Activated T-helper 1 cell treated with anti-CD3 and anti-CD28 coated beads, Interleukin-12 subunit alpha, Interleukin-12 subunit beta, Interleukin-2, Interleukin-4 antibody, amounts not matched to agents 30 ng/mL and 10 ng/mL and 1 ng/mL, durations not matched to agents 14 hours and 24 hours and 36 hours (primary cell): ENCODE measurements at regions of chr17 and their contacts with region 1.

Region 1: GRCh38 chr17:82450170-82451106 is at the start of gene CYBC1:
- DNase-seq: peak; percentile 93
- H3K4me3 Mint-ChIP-seq: peak within 1 kb of the TSS; percentile 91
- H3K27ac Mint-ChIP-seq: peak within 1 kb of the TSS; percentile 96
- H3K4me1 Mint-ChIP-seq: peaks cover 31% of the 10 kb centered on the region
- H3K27me3 Mint-ChIP-seq: no peaks in the 10 kb centered on the region
- total RNA-seq, gene CYBC1: 253 and 257 TPM in 2 replicates

Region 2: DNA sequence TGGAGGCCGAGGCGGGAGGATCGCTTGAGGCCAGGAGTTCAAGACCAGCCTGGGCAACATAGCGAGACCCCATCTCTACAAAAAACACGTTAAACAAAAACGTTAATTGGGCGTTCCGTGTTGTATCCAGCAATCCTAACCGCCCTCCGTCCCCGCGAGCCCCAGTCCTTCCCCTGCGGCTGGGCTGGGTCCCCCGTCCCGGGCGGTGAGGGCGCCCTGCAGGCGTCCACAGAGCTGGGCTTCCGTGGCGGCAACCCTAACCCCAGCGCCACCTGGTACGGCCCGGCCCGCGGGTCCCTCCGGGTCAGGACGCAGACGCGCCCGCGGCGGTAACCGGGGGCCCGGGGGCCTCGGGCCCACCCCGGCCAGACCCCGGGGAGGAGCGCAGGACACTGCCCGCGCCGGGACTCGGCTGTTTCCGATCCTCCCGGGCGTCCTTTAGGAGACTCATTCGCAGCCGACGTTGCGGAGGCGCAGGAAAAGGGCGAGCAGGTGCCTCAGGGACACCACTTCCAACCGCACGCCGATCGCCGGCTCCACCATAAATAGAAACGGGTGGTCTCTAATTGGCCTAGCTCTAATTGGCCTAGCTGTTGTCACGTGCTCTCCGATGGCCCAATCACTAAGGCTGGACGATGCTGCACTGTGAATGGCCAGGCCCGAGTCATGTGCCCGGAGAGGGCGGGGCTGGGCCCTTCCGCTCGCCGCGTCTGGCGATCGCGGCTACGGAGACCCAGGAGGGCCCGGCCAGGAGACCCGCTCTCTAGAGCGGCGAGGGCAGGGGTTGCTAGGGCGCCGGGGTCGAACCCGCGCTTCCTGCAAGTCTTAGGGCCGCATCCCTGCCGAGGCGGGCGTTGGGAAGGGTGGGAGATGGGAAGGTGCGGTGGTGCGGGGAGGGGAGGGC is 157.9 kb before region 1 on chr17:
- intact Hi-C with region 1: loop called (anchors 2 kb)
- DNase-seq: peak; percentile 92
- H3K4me3 Mint-ChIP-seq: peak overlapping the region; percentile 90
- H3K27ac Mint-ChIP-seq: peak overlapping the region; percentile 93
- H3K4me1 Mint-ChIP-seq: peaks cover 48% of the 10 kb centered on the region
- H3K27me3 Mint-ChIP-seq: peaks cover 2% of the 10 kb centered on the region

Region 3: DNA sequence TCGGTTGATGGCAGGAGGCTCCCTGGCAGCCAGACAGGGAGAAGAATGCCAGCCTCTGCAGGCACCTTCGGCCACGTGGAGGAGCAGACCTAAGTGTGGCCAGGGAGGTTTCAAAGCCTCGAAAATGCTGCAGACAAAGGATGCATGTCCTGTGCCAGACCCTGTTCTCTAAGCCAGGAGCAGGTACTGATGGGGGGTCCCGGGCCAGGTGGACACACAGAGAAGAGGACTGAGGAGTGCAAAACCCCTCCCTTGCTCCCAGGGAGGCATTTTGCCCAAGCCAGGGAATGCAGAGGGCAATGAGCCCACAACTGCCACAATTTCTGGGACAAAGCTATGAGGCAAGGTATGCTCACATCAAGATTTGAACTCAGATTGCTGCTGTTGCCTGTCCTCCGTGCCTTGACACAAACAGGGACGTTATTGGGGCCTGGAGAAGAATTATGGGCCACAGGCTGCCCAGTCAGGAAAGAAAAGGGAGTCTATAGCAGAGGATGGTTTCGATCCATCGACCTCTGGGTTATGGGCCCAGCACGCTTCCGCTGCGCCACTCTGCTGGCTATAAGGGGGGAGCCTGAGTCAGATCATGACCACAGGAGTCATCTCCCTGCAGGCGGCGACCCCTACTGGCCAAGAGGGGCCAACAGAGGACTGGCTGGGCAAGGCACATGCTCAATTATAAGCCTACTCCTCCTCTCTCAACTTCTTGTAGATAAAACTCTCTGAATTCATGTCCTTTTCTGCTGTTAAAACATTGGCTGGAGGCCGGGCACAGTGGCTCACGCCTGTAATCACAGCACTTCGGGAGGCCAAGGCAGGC is 44.0 kb after region 1 on chr17:
- intact Hi-C with region 1: loop called (anchors 1 kb)
- DNase-seq: peak; percentile 81
- H3K4me3 Mint-ChIP-seq: peak overlapping the region; percentile 12
- H3K27ac Mint-ChIP-seq: peak overlapping the region; percentile 87
- H3K4me1 Mint-ChIP-seq: peaks cover 29% of the 10 kb centered on the region
- H3K27me3 Mint-ChIP-seq: peaks cover 2% of the 10 kb centered on the region

Region 4: DNA sequence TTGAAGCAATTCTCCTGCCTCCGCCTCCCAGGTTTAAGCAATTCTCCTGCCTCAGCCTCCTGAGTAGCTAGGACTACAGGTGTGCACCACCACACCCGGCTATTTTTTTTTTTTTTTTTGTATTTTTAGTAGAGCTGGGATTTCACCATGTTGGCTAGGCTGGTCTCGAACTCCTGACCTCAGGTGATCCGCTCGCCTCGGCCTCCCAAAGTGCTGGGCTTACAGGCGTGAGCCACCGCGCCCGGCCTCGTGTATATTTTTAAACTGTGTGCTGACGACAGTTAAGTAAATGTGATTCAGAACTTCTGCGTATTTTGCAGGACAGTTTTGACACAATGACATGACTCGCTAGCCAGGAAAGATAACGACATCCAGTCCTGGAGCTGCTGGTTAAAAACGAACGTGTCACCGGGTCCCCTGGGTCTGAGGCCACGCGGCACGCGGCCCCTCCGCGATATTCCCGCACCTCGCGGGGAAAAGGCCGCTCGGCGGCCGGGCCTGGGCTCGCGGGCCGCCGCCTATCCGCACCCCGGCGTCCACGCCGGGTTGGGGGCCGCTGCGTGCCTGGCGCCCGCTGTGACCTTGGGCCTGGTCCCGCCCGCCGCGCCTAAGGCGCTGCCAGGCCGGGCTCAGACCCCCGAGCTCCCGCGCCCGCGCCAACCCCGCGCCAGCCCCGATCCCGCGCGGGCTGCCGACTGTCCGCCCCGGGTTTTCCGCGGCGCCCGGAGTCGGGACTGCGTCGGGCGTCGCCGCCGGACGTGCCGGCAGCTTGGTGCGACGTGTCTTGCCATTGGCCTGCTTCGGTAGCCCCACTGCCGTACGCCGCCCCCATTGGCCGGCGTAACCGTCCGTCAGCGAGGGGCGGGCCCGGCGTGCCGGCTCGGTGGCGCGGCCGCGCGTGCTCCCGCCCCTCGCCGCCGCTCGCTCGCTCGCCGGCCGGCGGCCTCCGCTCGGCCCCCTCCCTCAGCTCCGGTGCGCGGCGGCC is 68.7 kb after region 1 on chr17 and contains the start of gene FOXK2:
- intact Hi-C with region 1: loop called (anchors 2 kb)
- DNase-seq: peak; percentile 96
- H3K4me3 Mint-ChIP-seq: peak within 1 kb of the TSS; percentile 90
- H3K27ac Mint-ChIP-seq: peak within 1 kb of the TSS; percentile 92
- H3K4me1 Mint-ChIP-seq: peaks cover 14% of the 10 kb centered on the region
- H3K27me3 Mint-ChIP-seq: no peaks in the 10 kb centered on the region
- total RNA-seq, gene FOXK2: 97.7 and 98.1 TPM in 2 replicates

Region 5: DNA sequence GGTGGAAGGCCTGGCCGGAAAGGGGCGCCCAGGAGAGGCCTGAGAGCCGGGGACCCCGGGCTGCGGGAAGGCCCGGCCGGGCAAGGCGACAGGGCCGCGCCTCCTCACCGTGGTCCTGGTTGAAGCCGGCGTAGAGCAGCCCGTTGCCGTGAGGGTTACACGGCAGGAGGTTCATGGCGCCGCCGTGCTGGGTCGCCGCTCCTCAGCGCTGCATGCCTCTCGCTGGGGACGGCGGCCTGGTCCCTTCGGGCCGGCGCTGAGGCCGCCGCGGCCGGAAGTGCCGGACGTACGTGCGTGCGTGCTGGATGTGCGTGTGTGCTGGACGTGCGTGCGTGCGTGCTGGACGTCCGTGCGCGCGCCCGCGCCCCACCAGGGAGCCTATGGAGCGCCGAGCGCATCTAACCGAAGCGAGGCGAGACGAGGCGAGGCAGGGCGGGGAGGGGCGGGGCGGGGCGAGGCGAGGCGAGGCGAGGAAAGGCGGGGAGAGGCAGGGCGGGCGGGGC is 197.8 kb after region 1 on chr17 and contains the start of gene WDR45B:
- intact Hi-C with region 1: loop called (anchors 1 kb)
- DNase-seq: peak; percentile 90
- H3K4me3 Mint-ChIP-seq: peak within 1 kb of the TSS; percentile 89
- H3K27ac Mint-ChIP-seq: peak within 1 kb of the TSS; percentile 76
- H3K4me1 Mint-ChIP-seq: peaks cover 25% of the 10 kb centered on the region
- H3K27me3 Mint-ChIP-seq: no peaks in the 10 kb centered on the region
- total RNA-seq, gene WDR45B: 55.1 and 56.7 TPM in 2 replicates

Region 6: DNA sequence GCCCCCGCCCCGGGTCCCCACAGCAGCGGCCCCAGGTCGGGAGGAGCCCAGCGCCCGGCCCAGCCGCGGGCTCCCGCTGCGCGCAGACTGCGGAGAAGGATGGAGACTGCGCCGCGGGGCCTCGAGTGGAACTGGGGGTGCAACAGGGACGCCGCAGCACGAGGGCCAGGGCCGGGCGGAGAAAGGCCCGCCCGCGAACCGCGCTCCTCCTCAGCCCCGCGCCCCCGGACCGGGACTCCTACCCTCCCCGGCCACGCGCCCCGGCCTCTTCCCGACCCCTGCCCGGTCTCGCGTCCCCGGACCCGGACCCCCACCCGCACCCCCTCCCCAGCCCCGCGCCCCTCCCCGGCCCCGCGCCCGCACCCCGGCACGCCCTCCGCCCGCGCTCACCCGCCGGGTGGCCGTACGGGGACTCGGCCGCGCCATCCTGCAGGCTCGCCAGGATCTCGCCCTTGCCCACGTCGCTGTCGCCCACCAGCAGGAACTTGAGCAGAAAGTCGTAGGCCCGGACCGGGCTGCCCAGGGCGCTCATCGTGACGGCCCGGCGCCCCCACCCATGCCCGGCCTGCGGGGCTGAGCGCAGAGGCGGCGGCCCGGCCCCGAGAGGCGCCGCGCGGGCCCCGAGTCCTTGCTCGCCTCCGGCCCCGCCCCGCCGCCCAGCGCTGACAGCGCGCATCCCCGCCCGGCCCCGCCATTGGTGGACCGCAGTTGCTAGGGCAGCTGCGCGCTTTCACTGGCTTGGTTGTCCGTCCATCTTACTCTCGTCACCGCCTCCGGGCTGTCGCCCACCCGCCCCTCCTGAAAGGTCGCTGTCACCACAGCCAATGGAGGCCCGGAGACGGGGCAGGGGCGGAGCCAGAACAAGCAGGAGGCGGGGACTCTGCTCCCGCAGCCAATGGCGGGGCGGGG is 247.9 kb after region 1 on chr17 and contains the start of gene RAB40B:
- intact Hi-C with region 1: loop called (anchors 1 kb)
- DNase-seq: peak; percentile 98
- H3K4me3 Mint-ChIP-seq: peak within 1 kb of the TSS; percentile 83
- H3K27ac Mint-ChIP-seq: no peak within 1 kb of the TSS
- H3K4me1 Mint-ChIP-seq: no peaks in the 10 kb centered on the region
- H3K27me3 Mint-ChIP-seq: peaks cover 10% of the 10 kb centered on the region
- total RNA-seq, gene RAB40B: 3.6 and 5.2 TPM in 2 replicates

Region 7: GRCh38 chr17:83151442-83152226 is 701.2 kb after region 1 on chr17:
- intact Hi-C with region 1: no loop called
- DNase-seq: no peak
- H3K4me3 Mint-ChIP-seq: no peak overlapping the region
- H3K27ac Mint-ChIP-seq: no peak overlapping the region
- H3K4me1 Mint-ChIP-seq: peaks cover 31% of the 10 kb centered on the region
- H3K27me3 Mint-ChIP-seq: peaks cover 8% of the 10 kb centered on the region